ENCODE measurements at regions of chr1 and their contacts with region 1.

Region 1: DNA sequence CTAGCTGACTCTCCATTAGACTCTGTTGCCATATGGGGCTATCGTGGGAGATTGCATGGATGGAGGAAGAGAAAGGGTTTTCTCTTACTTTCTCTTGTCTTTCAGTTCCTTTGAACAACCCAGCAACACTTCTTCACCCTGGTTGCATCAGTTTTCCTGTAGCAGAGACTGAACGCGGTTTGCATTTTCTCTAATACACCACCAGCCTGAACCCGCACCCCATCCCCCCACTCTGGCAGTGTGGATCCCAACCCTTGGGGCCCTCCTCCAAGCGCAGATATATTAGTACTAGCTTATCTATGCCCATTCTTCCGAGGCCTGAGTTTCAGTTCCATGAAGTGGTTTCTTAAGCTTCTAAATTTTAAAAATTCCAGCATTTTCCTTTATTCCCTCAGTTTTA is 12.6 kb downstream of the DR1 start:
- DNase-seq: no peak
- H3K4me3 Mint-ChIP-seq: no peak overlapping the region
- H3K27ac Mint-ChIP-seq: no peak overlapping the region
- H3K4me1 Mint-ChIP-seq: peaks cover 55% of the 10 kb centered on the region
- H3K27me3 Mint-ChIP-seq: no peaks in the 10 kb centered on the region

Region 2: DNA sequence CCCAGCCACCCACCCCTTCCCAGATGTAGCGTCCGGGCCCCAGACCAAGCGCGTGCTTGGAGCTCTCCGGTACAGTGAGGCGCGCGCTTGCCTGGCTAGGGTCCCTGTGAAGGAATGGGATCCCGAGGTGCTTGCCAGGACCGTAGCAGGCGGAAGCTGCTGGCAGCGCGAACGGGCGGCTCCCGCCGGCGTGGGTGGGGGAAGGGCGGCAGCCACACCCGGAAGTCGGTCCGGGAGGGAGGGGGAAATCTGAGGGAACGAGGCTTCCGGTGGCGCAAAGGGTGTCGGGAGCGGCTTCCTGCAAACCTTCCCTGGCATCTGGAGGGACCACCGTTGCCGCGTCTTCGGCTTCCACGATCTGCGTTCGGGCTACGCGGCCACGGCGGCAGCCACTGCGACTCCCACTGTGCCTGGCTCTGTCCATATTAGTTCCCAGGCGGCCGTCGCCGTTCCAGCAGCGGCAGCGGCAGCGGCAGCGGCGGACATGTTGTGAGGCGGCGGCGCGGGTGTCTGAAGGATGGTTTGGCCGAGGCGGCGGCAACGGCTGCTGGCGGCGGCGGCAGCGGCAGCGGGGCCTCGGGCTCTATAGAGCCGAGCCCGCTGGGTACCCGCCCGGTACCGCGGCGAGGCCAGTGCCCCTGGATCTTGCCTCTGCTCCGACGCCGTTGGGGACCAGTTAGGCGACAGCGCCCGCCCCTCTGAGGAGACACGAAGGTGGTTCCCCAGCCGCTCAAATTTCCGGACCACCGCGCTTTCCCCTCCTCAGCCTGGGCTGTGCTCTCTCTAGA is 12.5 kb before region 1 on chr1 and contains the start of gene DR1:
- CTCF ChIA-PET with region 1: interaction called, 4 read pairs
- POLR2A ChIA-PET with region 1: interaction called, 26 read pairs
- DNase-seq: peak; percentile 92
- H3K4me3 Mint-ChIP-seq: peak within 1 kb of the TSS; percentile 99
- H3K27ac Mint-ChIP-seq: peak within 1 kb of the TSS; percentile 97
- H3K4me1 Mint-ChIP-seq: peaks cover 26% of the 10 kb centered on the region
- H3K27me3 Mint-ChIP-seq: no peaks in the 10 kb centered on the region
- total RNA-seq, gene DR1: 100 to 104 TPM

Region 3: GRCh38 chr1:93437976-93438605 is 79.8 kb after region 1 on chr1:
- CTCF ChIA-PET with region 1: no interaction called
- POLR2A ChIA-PET with region 1: no interaction called
- DNase-seq: no peak
- H3K4me3 Mint-ChIP-seq: no peak overlapping the region
- H3K27ac Mint-ChIP-seq: no peak overlapping the region
- H3K4me1 Mint-ChIP-seq: peaks cover 3% of the 10 kb centered on the region
- H3K27me3 Mint-ChIP-seq: peaks cover 33% of the 10 kb centered on the region

Measured in activated CD4-positive, alpha-beta memory T cell treated with anti-CD3 and anti-CD28 coated beads, Interleukin-2, amount 10 ng/mL, durations not matched to agents 7 days and 5 days (primary cell).